Activated CD8-positive, alpha-beta memory T cell treated with anti-CD3 and anti-CD28 coated beads, Interleukin-2, amount 10 ng/mL, durations not matched to agents 7 days and 5 days (primary cell): ENCODE measurements at regions of chr3 and their contacts with region 1.

Region 1: DNA sequence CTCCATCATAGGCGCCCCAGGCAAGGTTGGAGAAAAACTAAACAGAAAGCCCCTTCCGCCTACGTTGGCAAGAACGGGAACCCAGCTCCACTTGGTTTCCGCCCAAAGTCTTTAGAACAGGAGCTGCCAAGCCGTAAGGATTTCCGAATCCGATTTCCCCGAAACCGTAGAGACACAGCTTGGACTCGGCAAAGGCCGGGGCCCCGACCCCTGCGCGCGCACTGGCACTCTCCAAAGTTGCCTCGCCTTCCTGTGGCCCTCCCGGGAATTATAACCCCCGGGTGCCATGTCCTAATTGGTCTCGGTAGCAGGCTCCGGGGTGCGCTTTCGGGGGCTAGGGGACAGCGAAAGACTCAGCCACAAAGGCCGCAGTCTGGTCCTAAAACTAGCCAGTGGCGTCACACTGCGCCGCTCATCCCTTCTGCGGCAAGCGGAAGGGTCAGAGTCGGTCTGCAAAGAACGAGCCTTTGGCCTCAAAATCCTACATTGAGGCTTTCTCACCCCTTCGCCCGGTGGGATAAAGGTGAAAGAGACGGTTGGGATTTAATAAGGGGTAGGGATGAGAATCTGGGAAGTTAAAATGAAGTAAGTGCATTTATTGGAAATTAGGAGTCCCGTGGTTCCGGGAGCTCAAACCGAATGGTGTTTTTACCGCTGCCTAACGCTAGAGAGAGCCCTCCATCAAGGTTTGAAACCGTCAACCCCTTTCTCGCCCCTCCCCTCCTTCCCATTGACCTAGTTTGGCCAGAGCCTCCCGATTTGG is 6.8 kb downstream of the BCL6 start:
- DNase-seq: peak; percentile 87
- ATAC-seq: peak; percentile 37
- H3K4me3 Mint-ChIP-seq: peak overlapping the region; percentile 98
- H3K27ac Mint-ChIP-seq: peak overlapping the region; percentile 99
- H3K4me1 Mint-ChIP-seq: peaks cover 38% of the 10 kb centered on the region
- H3K27me3 Mint-ChIP-seq: peaks cover 10% of the 10 kb centered on the region

Region 2: DNA sequence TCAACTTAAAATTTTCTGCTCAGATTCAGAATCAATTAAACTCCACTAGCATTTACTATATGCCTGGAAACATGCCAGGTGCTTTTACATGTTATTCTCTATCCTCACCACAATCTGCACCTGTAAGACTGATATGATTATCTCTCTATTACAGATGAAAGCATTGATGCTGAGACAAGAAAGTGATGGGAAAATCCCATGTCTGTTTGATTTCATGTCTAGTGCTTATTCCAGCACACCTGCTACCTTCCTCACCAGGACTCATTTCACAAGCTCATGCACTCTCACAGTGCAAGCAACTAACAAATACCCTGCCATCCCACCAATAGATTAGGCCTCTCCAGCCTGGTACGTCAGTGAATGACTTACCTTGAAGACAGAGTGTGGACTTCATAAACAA is 31.7 kb after region 1 on chr3:
- CTCF ChIA-PET with region 1: no interaction called
- DNase-seq: no peak
- ATAC-seq: peak; percentile 33
- H3K4me3 Mint-ChIP-seq: no peak overlapping the region
- H3K27ac Mint-ChIP-seq: peak overlapping the region; percentile 9
- H3K4me1 Mint-ChIP-seq: peaks cover 24% of the 10 kb centered on the region
- H3K27me3 Mint-ChIP-seq: no peaks in the 10 kb centered on the region

Region 3: DNA sequence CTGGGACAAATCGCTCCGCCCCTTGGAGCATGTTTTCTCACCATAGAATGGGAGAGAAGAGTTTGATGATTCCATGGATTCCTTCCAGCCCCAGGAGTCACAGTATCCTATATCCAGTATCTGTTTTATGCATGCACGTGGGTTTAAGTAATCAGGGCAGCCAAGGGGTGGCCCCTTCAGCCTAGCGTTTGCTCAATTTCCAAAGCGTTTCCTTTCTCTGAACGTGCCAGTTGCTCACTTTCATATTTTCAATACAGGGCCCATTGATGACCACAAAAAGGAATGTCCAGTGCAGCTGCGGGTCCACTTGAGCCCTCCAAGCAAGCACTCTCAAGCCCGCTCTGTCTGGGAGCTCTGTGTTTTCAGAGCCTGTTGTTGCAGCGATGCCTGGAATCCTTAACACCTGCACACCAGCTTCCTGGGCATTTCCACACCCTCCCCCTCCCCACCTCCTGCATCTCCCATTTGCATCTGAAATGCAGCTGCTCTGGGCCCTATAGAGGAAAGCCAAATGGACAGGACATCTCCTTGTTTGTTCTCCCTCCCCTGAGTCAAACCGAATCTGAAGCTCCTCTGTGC is 251.2 kb after region 1 on chr3:
- CTCF ChIA-PET with region 1: interaction called, 35 read pairs
- DNase-seq: no peak
- ATAC-seq: no peak
- H3K4me3 Mint-ChIP-seq: no peak overlapping the region
- H3K27ac Mint-ChIP-seq: no peak overlapping the region
- H3K4me1 Mint-ChIP-seq: peaks cover 45% of the 10 kb centered on the region
- H3K27me3 Mint-ChIP-seq: no peaks in the 10 kb centered on the region

Region 4: GRCh38 chr3:188154014-188154808 is 415.7 kb after region 1 on chr3 and contains the start of gene LPP:
- CTCF ChIA-PET with region 1: interaction called, 57 read pairs
- DNase-seq: peak; percentile 90
- ATAC-seq: peak; percentile 84
- H3K4me3 Mint-ChIP-seq: peak within 1 kb of the TSS; percentile 82
- H3K27ac Mint-ChIP-seq: peak within 1 kb of the TSS; percentile 80
- H3K4me1 Mint-ChIP-seq: peaks cover 46% of the 10 kb centered on the region
- H3K27me3 Mint-ChIP-seq: no peaks in the 10 kb centered on the region
- total RNA-seq, gene LPP: 23.6 to 57.1 TPM

Region 5: GRCh38 chr3:188788621-188789081 is 1050.1 kb after region 1 on chr3:
- CTCF ChIA-PET with region 1: interaction called, 12 read pairs
- DNase-seq: peak; percentile 81
- ATAC-seq: peak; percentile 95
- H3K4me3 Mint-ChIP-seq: no peak overlapping the region
- H3K27ac Mint-ChIP-seq: no peak overlapping the region
- H3K4me1 Mint-ChIP-seq: no peaks in the 10 kb centered on the region
- H3K27me3 Mint-ChIP-seq: no peaks in the 10 kb centered on the region

Region 6: DNA sequence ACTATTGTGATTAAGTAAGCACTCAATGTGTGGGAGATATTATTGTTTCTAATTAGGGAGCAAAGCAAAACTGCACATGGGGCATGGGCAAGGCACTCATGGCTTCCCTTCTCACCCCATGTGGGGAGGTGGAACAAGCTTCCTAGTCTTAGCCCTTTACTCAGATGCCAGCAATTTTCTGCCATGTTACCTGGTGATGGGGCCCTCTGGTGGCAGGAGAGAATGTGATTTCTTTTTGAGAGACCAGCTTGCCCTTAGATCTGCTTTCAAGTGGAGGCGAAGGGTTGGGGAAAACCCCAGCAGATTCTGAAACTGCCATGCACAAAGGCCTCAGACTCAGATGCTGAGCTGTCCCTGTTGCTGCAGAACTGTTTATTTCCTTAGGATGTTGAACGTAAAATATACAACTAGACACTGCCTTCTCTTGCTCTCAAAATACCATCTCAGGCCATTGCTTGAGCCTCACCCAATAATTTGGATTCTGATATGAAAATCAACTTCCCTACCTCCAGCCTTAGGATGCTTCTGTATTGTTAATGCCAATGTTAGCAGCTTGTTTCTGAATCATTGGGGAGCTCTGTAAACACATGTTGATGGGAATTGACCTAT is 1303.1 kb after region 1 on chr3:
- CTCF ChIA-PET with region 1: interaction called, 97 read pairs
- DNase-seq: peak; percentile 86
- ATAC-seq: peak; percentile 94
- H3K4me3 Mint-ChIP-seq: no peak overlapping the region
- H3K27ac Mint-ChIP-seq: peak overlapping the region; percentile 73
- H3K4me1 Mint-ChIP-seq: peaks cover 58% of the 10 kb centered on the region
- H3K27me3 Mint-ChIP-seq: no peaks in the 10 kb centered on the region

Region 7: DNA sequence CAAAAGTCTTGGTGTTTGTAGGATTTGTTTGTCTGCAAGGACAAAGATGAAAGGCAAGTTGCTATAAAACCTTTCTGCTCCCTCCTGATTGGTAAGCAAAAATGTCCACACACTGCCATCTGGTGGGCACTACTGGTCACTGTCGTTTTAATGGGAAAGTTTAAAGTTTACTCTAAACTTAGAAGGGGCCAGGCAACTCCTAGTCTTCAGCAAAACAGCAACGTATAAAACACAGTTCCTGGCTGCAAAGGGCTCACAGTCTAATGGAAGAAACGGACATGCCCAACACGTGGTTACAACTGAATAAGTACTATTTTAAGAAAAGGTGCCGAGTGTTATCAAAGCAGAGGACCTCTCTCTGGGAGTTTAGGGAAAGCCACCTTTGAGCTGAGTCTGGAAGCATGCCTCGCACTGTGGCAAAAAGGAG is 1409.6 kb after region 1 on chr3:
- CTCF ChIA-PET with region 1: interaction called, 95 read pairs
- DNase-seq: peak; percentile 78
- ATAC-seq: peak; percentile 73
- H3K4me3 Mint-ChIP-seq: no peak overlapping the region
- H3K27ac Mint-ChIP-seq: no peak overlapping the region
- H3K4me1 Mint-ChIP-seq: peaks cover 32% of the 10 kb centered on the region
- H3K27me3 Mint-ChIP-seq: no peaks in the 10 kb centered on the region